Endothelial cell of umbilical vein (primary cell): ENCODE measurements at regions of chr15 and their contacts with region 1.

Region 1: GRCh38 chr15:45891766-45892165 is 256.9 kb downstream of the SQOR start:
- DNase-seq: no peak
- H3K4me3 ChIP-seq: no peak overlapping the region
- H3K27ac ChIP-seq: no peak overlapping the region
- H3K4me1 ChIP-seq: no peaks in the 10 kb centered on the region
- H3K27me3 ChIP-seq: no peaks in the 10 kb centered on the region
- CTCF ChIP-seq: no peak
- POLR2A ChIP-seq: no peak

Region 2: DNA sequence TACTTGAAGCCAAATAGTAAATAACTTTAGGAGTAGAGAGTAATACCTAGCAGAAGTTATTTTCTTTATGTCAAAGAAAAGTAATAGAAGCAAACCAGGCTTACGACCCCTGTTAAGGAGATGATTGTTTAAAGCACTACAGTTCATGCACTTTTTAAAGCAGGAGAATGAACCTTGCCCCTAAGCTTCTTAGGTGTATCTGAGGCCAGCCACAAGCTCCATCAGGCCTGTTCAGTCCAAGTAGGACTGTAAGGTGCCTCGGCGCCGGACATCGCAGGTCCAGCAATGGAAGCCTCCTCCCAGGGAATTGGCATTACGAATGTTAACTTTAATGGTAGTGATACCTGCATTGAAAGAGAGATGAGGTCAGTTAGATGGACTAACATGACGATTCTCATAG is 529.9 kb before region 1 on chr15:
- CTCF ChIA-PET with region 1: no interaction called
- POLR2A ChIA-PET with region 1: no interaction called
- dilution Hi-C with region 1: no loop called
- intact Hi-C with region 1: no loop called
- DNase-seq: no peak
- H3K4me3 ChIP-seq: no peak overlapping the region
- H3K27ac ChIP-seq: no peak overlapping the region
- H3K4me1 ChIP-seq: no peaks in the 10 kb centered on the region
- H3K27me3 ChIP-seq: no peaks in the 10 kb centered on the region
- CTCF ChIP-seq: no peak
- POLR2A ChIP-seq: no peak

Region 3: DNA sequence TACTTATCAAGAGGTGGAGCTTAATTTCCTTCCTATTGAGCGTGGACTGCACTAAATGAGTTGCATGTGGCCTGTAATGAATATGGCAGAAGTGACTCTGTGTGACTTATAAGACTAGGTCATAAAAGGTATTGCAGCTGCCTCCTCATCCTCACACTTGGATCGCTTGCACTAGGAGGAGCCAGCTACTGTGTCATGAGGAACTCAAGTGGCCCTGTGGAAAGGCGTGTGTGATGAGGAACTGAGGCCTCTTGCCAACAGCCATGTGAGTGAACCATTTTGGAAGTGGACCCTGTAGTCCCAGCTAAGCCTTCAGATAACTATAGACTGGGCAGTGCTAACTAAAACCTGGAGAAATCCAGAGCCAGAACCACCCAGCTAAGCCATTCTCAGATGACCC is 362.2 kb before region 1 on chr15:
- CTCF ChIA-PET with region 1: no interaction called
- POLR2A ChIA-PET with region 1: no interaction called
- dilution Hi-C with region 1: no loop called
- intact Hi-C with region 1: no loop called
- DNase-seq: no peak
- H3K4me3 ChIP-seq: no peak overlapping the region
- H3K27ac ChIP-seq: no peak overlapping the region
- H3K4me1 ChIP-seq: no peaks in the 10 kb centered on the region
- H3K27me3 ChIP-seq: peaks cover 0 to 2% of the 10 kb centered on the region in 2 experiments
- CTCF ChIP-seq: no peak
- POLR2A ChIP-seq: no peak

Region 4: DNA sequence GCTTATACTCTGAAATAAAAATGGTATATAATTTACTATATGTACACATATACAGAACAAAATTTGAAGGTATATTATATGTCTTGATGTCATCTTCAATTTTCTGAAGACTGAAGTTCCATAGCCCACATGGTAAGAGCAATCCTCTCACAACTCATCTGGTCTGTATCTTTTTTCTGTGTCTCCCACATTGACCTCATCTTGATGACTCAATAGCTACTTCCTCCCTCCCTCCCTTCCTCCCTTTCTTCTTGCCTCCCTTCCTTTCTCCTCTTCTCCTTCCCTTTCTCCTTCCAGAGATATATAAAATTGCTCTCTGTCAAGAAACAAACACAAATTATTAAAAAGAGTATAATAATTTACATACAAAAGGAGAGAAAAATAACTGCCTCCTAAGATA is 11.5 kb after region 1 on chr15:
- CTCF ChIA-PET with region 1: no interaction called
- POLR2A ChIA-PET with region 1: no interaction called
- dilution Hi-C with region 1: no loop called
- intact Hi-C with region 1: loop called (anchors 2 kb)
- DNase-seq: peak; percentile 28
- H3K4me3 ChIP-seq: no peak overlapping the region
- H3K27ac ChIP-seq: peak overlapping the region; percentile 48
- H3K4me1 ChIP-seq: peaks cover 27% of the 10 kb centered on the region
- H3K27me3 ChIP-seq: no peaks in the 10 kb centered on the region
- CTCF ChIP-seq: no peak
- POLR2A ChIP-seq: no peak